ENCODE measurements at regions of chr19 and their contacts with region 1.

Region 1: DNA sequence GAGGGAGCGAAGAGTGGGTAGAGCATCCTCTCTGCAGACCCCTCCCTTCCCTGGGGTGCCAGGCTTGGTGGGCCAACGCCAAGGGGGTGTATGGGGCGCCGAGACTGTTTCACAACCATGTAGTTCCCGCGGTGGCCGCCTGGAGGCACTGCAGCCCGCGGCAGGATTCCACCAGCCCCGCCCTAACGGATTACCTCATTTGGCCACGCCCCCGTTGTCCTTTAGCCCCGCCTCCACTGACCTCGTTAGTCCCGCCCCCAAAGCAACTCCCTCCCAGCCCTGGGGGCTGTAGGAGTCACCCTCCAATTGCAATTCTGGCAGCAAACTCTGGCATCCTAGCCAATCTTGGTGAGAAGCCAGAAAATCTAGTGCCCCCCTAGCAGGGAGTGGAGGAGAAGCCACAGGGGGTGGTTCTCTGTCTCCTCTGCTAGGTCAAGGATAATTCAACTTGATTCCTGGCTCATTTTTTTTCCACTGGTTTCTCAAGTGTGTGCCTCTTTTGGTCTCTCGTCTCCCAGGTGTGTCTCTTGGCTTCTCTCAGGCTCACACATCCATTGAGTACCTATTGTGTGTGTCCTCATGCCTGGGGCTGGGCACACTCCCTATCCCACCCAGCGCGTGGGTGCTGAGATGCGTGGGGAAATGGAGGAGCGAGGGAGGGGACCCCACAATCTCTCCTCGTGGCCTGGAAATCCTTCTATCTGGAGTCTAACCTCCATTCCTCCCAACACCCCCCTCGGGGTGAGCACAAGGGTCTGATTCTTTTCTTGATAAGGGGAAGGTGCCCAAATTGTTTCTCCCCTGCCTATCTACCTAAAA is 2.0 kb downstream of the OLFM2 start:
- DNase-seq: no peak
- H3K4me3 ChIP-seq: peak overlapping the region in 1 of 4 donors; percentile 28
- H3K27ac ChIP-seq: peak overlapping the region; percentile 31 to 52 (median 45)
- H3K4me1 ChIP-seq: peaks cover 19 to 45% (median 27%) of the 10 kb centered on the region in 3 donors
- H3K27me3 ChIP-seq: peaks cover 0 to 66% (median 2%) of the 10 kb centered on the region in 4 donors
- CTCF ChIP-seq: peak; percentile 72 to 98 (median 89)
- POLR2A ChIP-seq: no peak

Region 2: GRCh38 chr19:10000171-10000826 is 66.0 kb after region 1 on chr19:
- intact Hi-C with region 1: no loop called
- DNase-seq: no peak
- H3K4me3 ChIP-seq: no peak overlapping the region
- H3K27ac ChIP-seq: peak overlapping the region in 1 of 4 donors; percentile 33
- H3K4me1 ChIP-seq: peaks cover 0 to 20% (median 0%) of the 10 kb centered on the region in 3 donors
- H3K27me3 ChIP-seq: peaks cover 0 to 11% (median 0%) of the 10 kb centered on the region in 4 donors
- CTCF ChIP-seq: peak; percentile 35 to 78 (median 56)
- POLR2A ChIP-seq: no peak

Region 3: GRCh38 chr19:10027158-10027693 is 92.9 kb after region 1 on chr19:
- intact Hi-C with region 1: loop called (anchors 2 kb)
- DNase-seq: no peak
- H3K4me3 ChIP-seq: peak overlapping the region in 1 of 4 donors; percentile 9
- H3K27ac ChIP-seq: peak overlapping the region in 1 of 4 donors; percentile 4
- H3K4me1 ChIP-seq: peaks cover 0 to 12% (median 6%) of the 10 kb centered on the region in 3 donors
- H3K27me3 ChIP-seq: peaks cover 0 to 25% (median 0%) of the 10 kb centered on the region in 4 donors
- CTCF ChIP-seq: no peak
- POLR2A ChIP-seq: no peak

Region 4: GRCh38 chr19:10251792-10252694 is 317.7 kb after region 1 on chr19 and contains the start of gene MRPL4:
- intact Hi-C with region 1: loop called (anchors 5 kb)
- DNase-seq: peak; percentile 86
- H3K4me3 ChIP-seq: peak within 1 kb of the TSS; percentile 54 to 83 (median 80)
- H3K27ac ChIP-seq: peak within 1 kb of the TSS; percentile 83 to 93 (median 92)
- H3K4me1 ChIP-seq: peaks cover 0 to 39% (median 7%) of the 10 kb centered on the region in 3 donors
- H3K27me3 ChIP-seq: no peaks in the 10 kb centered on the region
- CTCF ChIP-seq: peak in 3 of 6 experiments; percentile 18 to 30 (median 30)
- POLR2A ChIP-seq: peak in 3 of 4 donors; percentile 34 to 60 (median 50)
- total RNA-seq, gene MRPL4: 77.6 to 105 (median 92.6) TPM

Region 5: GRCh38 chr19:10403137-10404021 is 469.0 kb after region 1 on chr19 and contains the start of gene CDC37:
- intact Hi-C with region 1: loop called (anchors 5 kb)
- DNase-seq: peak; percentile 63
- H3K4me3 ChIP-seq: peak within 1 kb of the TSS; percentile 67 to 93 (median 70)
- H3K27ac ChIP-seq: peak within 1 kb of the TSS; percentile 74 to 90 (median 86)
- H3K4me1 ChIP-seq: peaks cover 27 to 92% (median 37%) of the 10 kb centered on the region in 3 donors
- H3K27me3 ChIP-seq: peaks cover 0 to 43% (median 2%) of the 10 kb centered on the region in 4 donors
- CTCF ChIP-seq: no peak
- POLR2A ChIP-seq: peak in 3 of 4 donors; percentile 17 to 86 (median 75)
- total RNA-seq, gene CDC37: 128 to 171 (median 152) TPM